ENCODE measurements at regions of chr11 and their contacts with region 1.

Region 1: DNA sequence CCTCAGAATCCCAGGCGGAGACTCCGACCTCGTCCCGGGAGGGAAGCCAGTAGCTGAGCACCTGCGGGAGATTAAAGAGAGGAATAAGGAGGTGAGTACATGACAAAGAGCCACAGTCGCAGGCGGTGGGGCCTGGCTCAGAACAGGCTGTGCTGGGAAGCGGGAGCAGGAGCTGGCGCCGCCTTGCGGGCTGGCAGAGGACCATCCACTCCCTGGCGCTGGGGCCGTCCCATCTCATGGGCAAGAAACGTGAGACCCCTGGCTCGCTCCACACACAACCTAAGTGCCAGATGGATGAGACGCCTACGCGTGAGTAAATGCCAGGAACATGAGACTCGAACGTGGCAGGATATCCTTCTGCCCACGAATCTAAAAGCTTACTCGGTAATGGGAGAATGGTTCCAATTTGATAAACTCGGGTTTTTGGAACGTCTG is 6.3 kb downstream of the CEND1 start:
- DNase-seq: peak; percentile 97
- ATAC-seq: peak; percentile 94
- H3K4me3 Mint-ChIP-seq: peak overlapping the region; percentile 52
- H3K27ac Mint-ChIP-seq: peak overlapping the region; percentile 97
- H3K4me1 Mint-ChIP-seq: peaks cover 28% of the 10 kb centered on the region
- H3K27me3 Mint-ChIP-seq: no peaks in the 10 kb centered on the region
- CTCF ChIP-seq: peak; percentile 57

Region 2: DNA sequence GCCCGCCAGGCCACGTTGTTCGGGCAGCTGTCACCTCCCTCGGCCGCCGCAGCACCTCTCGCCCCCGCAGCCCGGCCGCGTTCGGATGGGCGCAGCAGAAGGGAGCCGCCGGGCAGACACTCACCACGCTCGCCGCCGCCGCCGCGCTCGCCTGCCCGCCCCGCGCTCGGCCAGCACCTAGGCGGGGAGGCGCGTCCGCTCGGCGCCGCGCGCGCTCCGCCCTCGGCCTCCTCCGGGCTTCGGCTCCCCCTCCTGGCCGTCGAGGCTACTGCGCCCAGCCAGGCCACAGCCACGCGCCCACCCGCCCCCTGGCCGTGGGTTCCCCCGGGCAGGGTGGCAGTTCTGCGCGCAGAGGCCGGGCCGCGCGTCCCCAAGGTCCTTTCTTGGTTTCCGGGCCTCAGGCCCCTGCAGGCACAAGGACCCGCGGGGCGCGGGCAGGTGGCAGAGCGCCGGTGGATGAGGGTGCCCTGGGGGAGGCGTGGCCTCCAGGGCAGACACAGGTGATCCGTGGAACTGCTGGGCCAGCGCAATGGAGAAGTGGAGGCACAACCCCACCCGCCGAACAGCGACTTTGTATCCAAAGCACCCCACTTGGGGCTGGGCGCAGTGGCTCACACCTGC is 14.6 kb after region 1 on chr11 and contains the start of gene SLC25A22:
- CTCF ChIA-PET with region 1: interaction called, 13 read pairs
- POLR2A ChIA-PET with region 1: interaction called, 8 read pairs
- DNase-seq: peak; percentile 85
- ATAC-seq: peak; percentile 70
- H3K4me3 Mint-ChIP-seq: peak within 1 kb of the TSS; percentile 76
- H3K27ac Mint-ChIP-seq: no peak within 1 kb of the TSS
- H3K4me1 Mint-ChIP-seq: peaks cover 13% of the 10 kb centered on the region
- H3K27me3 Mint-ChIP-seq: no peaks in the 10 kb centered on the region
- CTCF ChIP-seq: peak; percentile 88
- total RNA-seq, gene SLC25A22: 35.0 to 44.8 TPM (median 36.7 TPM) in 3 replicates

Region 3: GRCh38 chr11:809287-810039 is 25.9 kb after region 1 on chr11 and contains the start of gene RPLP2:
- CTCF ChIA-PET with region 1: interaction called, 13 read pairs
- POLR2A ChIA-PET with region 1: no interaction called
- DNase-seq: peak; percentile 97
- ATAC-seq: peak; percentile 66
- H3K4me3 Mint-ChIP-seq: peak within 1 kb of the TSS; percentile 92
- H3K27ac Mint-ChIP-seq: peak within 1 kb of the TSS; percentile 97
- H3K4me1 Mint-ChIP-seq: peaks cover 40% of the 10 kb centered on the region
- H3K27me3 Mint-ChIP-seq: no peaks in the 10 kb centered on the region
- CTCF ChIP-seq: no peak
- total RNA-seq, gene RPLP2: 2,582 to 2,814 TPM (median 2,761 TPM) in 3 replicates

Region 4: DNA sequence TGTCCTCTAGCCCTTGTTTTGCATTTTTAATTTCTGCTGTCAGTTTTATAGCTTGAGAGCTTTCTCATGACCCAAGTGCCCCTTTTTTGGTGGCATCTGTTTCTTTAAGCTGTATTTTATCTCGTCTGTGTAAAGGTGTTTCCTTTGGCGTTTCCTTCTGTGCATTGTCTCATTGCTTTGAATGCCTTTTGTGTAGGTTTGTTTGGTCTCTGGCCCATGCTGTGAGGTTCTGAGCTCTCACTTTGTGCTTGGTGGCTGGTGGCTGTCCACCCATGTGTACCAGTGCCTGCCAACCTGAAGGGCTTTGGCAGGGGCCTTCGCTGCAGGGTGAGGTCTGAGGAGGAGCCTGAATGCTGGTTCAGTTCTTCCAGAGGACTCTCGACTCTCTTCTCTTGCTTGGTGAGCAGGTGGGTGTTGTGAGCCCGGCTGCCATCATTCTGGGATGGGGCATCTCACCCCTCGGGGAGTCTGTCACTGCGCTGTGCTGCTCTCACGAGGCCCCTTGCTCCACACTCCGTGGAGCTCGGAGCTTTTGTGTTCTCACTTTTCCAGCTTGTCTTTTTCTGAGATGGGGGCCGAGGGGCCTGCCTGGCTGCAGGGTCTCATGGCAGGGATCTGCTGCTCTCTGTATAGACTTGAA is 157.0 kb after region 1 on chr11:
- CTCF ChIA-PET with region 1: no interaction called
- POLR2A ChIA-PET with region 1: no interaction called
- DNase-seq: no peak
- ATAC-seq: no peak
- H3K4me3 Mint-ChIP-seq: no peak overlapping the region; the same call in 1 of the 2 replicates
- H3K27ac Mint-ChIP-seq: peak overlapping the region; percentile 77
- H3K4me1 Mint-ChIP-seq: peaks cover 70% of the 10 kb centered on the region
- H3K27me3 Mint-ChIP-seq: no peaks in the 10 kb centered on the region
- CTCF ChIP-seq: no peak